CD8-positive, alpha-beta T cell (primary cell): ENCODE measurements at regions of chrX and their contacts with region 1.

Region 1: GRCh38 chrX:44253575-44253942 is 89.9 kb downstream of the EFHC2 start:
- DNase-seq: no peak
- ATAC-seq: no peak
- H3K4me3 ChIP-seq: peak overlapping the region in 1 of 2 experiments; percentile 31
- H3K4me3 Mint-ChIP-seq: peak overlapping the region; percentile 39
- H3K27ac ChIP-seq: peak overlapping the region; percentile 52 to 81
- H3K27ac Mint-ChIP-seq: peak overlapping the region; percentile 90
- H3K4me1 ChIP-seq: peaks cover 18% of the 10 kb centered on the region
- H3K4me1 Mint-ChIP-seq: peaks cover 40% of the 10 kb centered on the region
- H3K27me3 ChIP-seq: no peaks in the 10 kb centered on the region
- H3K27me3 Mint-ChIP-seq: no peaks in the 10 kb centered on the region
- CTCF ChIP-seq: no peak

Region 2: DNA sequence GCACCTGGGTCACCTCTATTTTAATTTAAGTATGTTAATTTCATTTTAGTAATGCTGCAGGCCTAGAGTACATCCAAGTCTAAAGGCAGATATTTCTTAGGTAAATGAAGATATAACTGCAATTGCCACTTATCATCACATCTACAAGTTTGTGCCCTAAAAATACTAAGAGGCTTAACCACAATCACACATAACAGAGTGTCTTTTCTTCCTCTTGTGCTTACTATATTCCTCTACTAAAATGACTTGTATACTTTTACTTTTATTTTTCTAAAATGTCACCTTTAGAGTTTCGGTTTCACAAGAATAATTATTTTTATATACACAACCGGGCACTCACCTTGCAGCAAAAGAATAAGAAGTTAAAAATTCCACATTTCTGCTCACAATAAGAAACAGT is 12.0 kb after region 1 on chrX:
- CTCF ChIA-PET with region 1: interaction called, 3 read pairs
- POLR2A ChIA-PET with region 1: interaction called, 17 read pairs
- intact Hi-C with region 1: no loop called
- DNase-seq: peak in 1 of 9 experiments; percentile 41
- ATAC-seq: peak; percentile 34
- H3K4me3 ChIP-seq: no peak overlapping the region
- H3K4me3 Mint-ChIP-seq: peak overlapping the region; percentile 55
- H3K27ac ChIP-seq: peak overlapping the region in 1 of 2 experiments; percentile 56
- H3K27ac Mint-ChIP-seq: peak overlapping the region; percentile 72
- H3K4me1 ChIP-seq: peaks cover 23% of the 10 kb centered on the region
- H3K4me1 Mint-ChIP-seq: peaks cover 43% of the 10 kb centered on the region
- H3K27me3 ChIP-seq: no peaks in the 10 kb centered on the region
- H3K27me3 Mint-ChIP-seq: no peaks in the 10 kb centered on the region
- CTCF ChIP-seq: no peak